Naive thymus-derived CD4-positive, alpha-beta T cell (primary cell): ENCODE measurements at regions of chr1 and their contacts with region 1.

Region 1: DNA sequence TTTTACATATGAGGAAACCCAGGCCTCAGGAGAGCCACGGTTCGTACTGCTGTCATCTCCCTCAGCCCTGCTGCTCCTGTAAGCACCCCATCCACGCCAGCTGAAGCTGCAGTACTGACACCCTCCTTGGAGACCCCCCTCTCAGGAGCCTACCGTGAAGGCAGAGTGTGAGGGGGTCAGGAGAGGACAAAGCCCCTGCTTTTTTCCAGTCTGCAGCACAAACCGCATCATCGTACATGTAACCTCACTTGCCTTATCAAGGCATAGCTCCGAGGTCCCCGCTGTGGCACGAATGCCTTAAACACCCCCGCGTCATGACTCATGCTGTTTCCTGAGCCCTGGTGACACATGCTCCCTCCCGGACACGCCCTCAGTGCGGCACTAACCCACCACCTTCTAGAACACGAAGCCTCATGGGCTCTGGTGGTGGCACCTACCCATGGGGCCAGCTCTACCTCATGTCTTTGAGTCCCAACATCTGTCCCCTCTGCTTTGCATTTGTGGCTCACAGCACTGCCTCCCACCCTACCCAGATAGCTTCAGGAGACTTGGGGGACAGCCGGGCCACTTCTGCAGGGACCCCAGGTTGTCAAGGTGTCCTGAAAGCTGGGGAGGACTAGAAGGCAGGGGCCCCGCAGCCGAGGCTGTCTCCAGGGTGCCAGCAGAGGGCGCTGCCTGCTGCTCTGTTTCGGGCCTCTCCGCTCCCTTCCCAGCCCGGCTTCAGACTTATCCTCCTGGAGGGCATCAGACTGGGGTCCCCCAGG is 4.9 kb downstream of the SH3BGRL3 start:
- DNase-seq: peak; percentile 60 to 97 (median 87)
- ATAC-seq: peak; percentile 81
- H3K4me3 ChIP-seq: peak overlapping the region; percentile 18
- H3K4me3 Mint-ChIP-seq: peak overlapping the region; percentile 44 to 88 (median 76)
- H3K27ac ChIP-seq: peak overlapping the region; percentile 86
- H3K27ac Mint-ChIP-seq: peak overlapping the region; percentile 90 to 99 (median 97)
- H3K4me1 ChIP-seq: peaks cover 89 to 91% of the 10 kb centered on the region in 2 donors
- H3K4me1 Mint-ChIP-seq: peaks cover 62 to 94% (median 86%) of the 10 kb centered on the region in 7 donors
- H3K27me3 ChIP-seq: no peaks in the 10 kb centered on the region
- H3K27me3 Mint-ChIP-seq: no peaks in the 10 kb centered on the region

Region 2: DNA sequence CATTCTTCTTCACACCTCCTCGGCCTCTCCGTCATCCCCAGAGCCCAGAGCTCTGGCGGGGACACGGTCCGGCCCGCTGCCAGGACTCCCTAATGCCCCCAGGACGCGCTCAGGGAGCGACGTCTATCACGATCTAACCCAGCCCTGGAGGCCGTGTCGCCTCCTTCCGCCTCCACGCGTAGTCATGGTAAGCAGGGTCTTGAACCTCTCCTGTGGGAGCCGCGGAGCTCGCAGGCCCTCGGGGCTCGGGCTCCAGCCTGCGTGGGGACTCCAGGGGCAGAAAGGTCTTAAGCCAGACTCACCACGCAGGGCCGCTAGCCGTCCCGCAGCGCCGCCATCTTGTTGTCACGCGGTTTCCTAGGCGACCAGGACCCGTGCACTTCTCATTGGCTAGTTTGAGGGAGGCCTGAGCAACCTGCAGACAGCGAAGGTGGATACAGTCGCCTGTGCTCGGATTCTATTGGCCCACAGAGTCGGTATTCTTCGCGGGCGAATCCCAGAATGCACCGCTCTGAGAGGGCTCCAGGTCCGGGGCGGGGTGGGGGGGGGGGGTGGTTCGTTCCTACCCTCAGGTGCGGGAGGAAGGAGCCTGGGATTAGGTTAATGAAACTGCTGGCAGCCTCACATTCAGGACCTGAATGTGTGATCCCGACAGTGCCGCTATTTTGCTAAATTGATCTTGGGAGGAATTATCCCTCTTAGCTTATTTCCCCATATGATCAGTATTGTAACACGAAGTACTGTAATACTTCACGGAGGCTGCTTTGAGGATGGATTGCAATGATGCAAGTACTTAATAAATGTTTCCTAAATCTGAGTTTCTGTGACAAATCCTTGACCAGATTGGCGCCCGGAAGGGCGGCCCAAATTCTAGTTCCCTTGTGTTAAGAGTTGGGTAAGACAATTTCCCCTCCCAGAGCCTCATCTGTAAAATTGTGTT is 21.8 kb after region 1 on chr1 and contains the start of gene UBXN11:
- CTCF ChIA-PET with region 1: interaction called, 131 read pairs
- POLR2A ChIA-PET with region 1: interaction called, 1,967 read pairs
- intact Hi-C with region 1: loop called (anchors 1 kb)
- DNase-seq: peak; percentile 66 to 95 (median 89)
- ATAC-seq: peak; percentile 99
- H3K4me3 ChIP-seq: peak within 1 kb of the TSS; percentile 87
- H3K4me3 Mint-ChIP-seq: peak within 1 kb of the TSS; percentile 93 to 99 (median 98)
- H3K27ac ChIP-seq: peak within 1 kb of the TSS; percentile 76
- H3K27ac Mint-ChIP-seq: peak within 1 kb of the TSS; percentile 90 to 99 (median 96)
- H3K4me1 ChIP-seq: peaks cover 16 to 31% of the 10 kb centered on the region in 2 donors
- H3K4me1 Mint-ChIP-seq: peaks cover 25 to 58% (median 34%) of the 10 kb centered on the region in 7 donors
- H3K27me3 ChIP-seq: no peaks in the 10 kb centered on the region
- H3K27me3 Mint-ChIP-seq: no peaks in the 10 kb centered on the region
- total RNA-seq, gene UBXN11: 35.7 to 131 (median 124) TPM

Region 3: DNA sequence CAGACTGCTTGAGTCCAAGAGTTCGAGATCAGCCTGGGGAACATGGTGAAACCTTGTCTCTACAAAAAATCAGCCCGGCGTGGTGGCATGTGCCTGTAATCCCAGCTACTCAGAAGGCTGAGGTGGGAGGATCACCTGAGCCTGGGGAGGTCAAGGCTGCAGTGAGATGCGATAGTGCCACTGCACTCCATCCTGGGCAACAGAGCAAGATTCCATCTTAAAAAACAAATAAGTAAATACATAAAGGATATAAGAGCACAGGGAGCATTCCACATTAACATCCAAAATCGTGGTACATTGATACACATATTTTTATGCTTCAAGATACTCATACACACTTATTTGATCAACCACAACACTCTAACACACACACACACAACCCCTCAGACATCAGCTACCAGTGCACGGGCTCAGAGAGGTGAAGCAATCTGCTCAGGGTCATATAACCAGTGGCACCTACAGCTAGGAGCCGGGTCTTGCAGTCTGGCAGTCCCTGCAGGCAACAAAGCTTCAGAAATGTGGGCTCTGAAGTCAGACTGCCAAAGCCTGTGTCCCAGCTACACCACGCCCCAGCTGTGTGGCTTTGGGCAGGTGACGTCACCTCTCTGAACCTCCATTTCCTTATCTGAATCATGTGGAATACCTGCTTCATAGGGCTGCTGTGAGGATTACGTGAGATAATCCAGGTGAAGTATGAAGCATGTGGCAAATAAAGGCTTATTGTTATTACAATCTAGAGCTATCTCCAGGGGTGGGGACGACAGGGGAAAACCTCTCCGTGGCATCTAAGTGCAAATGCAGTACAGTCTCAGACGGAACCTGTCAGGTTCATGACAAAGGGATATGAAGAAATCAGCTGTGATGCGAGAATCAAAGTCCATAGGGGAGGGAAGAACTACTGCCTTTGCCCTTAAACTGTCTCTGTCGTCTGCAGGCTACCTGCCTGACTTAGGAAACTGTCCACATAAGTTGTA is 73.9 kb after region 1 on chr1:
- CTCF ChIA-PET with region 1: interaction called, 22 read pairs
- POLR2A ChIA-PET with region 1: interaction called, 8 read pairs
- intact Hi-C with region 1: loop called (anchors 1 to 2 kb)
- DNase-seq: peak in 8 of 9 donors; percentile 58 to 88 (median 70)
- ATAC-seq: peak; percentile 84
- H3K4me3 ChIP-seq: peak overlapping the region; percentile 10
- H3K4me3 Mint-ChIP-seq: peak overlapping the region; percentile 43 to 83 (median 63)
- H3K27ac ChIP-seq: no peak overlapping the region
- H3K27ac Mint-ChIP-seq: peak overlapping the region in 8 of 9 donors; percentile 28 to 78 (median 46)
- H3K4me1 ChIP-seq: peaks cover 29 to 32% of the 10 kb centered on the region in 2 donors
- H3K4me1 Mint-ChIP-seq: peaks cover 25 to 47% (median 40%) of the 10 kb centered on the region in 7 donors
- H3K27me3 ChIP-seq: no peaks in the 10 kb centered on the region
- H3K27me3 Mint-ChIP-seq: peaks cover 7 to 29% (median 18%) of the 10 kb centered on the region in 5 donors

Region 4: DNA sequence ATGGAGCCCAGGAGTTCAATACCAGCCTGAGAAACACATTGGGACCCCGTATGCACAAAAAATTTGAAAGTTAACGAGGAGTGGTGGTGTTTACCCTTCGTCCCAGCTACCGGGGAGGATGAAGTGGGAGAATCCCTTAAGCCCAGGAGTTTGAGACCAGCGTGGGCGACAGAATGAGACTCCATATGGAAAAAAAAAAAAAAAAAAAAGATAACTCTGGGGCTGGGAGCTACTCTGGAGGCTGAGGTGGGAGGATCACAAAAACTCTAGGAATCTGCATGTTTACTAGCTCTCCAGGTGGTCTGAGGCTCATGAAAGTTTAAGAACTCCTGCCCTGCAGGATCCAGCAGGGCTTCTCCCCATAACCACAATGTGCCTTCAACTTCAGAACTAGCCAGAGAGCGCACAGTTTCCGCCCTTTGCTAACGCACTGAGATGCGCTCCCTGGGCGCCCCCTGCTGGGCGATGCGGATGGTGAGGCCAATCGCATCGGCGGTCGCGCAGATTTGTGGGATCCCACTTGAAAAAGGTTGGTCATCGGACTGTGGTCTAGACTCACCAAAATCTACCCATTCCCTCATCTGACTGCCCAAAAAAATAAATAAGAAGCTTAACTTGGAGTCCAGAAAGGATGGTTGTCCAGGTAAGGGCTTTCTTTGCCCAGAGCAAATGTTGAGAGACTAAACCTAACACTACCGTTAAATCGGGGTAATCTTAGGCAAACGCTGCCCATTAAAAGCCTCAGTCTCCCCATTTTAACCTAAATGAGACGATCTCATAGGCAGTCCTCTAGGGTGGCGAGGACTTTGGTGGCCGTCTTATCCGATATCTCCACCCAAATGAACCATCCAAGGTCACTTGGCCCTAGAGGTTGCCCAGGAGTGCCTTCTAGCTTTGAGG is 79.0 kb after region 1 on chr1:
- CTCF ChIA-PET with region 1: interaction called, 22 read pairs
- POLR2A ChIA-PET with region 1: interaction called, 8 read pairs
- intact Hi-C with region 1: loop called (anchors 1 to 2 kb)
- DNase-seq: peak; percentile 71 to 87 (median 82)
- ATAC-seq: peak; percentile 84
- H3K4me3 ChIP-seq: no peak overlapping the region
- H3K4me3 Mint-ChIP-seq: peak overlapping the region in 6 of 10 donors; percentile 39 to 72 (median 40)
- H3K27ac ChIP-seq: no peak overlapping the region
- H3K27ac Mint-ChIP-seq: peak overlapping the region in 4 of 9 donors; percentile 20 to 52 (median 40)
- H3K4me1 ChIP-seq: peaks cover 30 to 44% of the 10 kb centered on the region in 2 donors
- H3K4me1 Mint-ChIP-seq: peaks cover 28 to 53% (median 47%) of the 10 kb centered on the region in 7 donors
- H3K27me3 ChIP-seq: no peaks in the 10 kb centered on the region
- H3K27me3 Mint-ChIP-seq: peaks cover 7 to 37% (median 16%) of the 10 kb centered on the region in 5 donors

Region 5: GRCh38 chr1:26391450-26391849 is 106.7 kb after region 1 on chr1:
- CTCF ChIA-PET with region 1: interaction called, 11 read pairs
- POLR2A ChIA-PET with region 1: interaction called, 11 read pairs
- intact Hi-C with region 1: loop called (anchors 1 kb)
- DNase-seq: peak in 5 of 9 donors; percentile 17 to 46 (median 43)
- ATAC-seq: peak; percentile 86
- H3K4me3 ChIP-seq: no peak overlapping the region
- H3K4me3 Mint-ChIP-seq: peak overlapping the region in 1 of 10 donors; percentile 55
- H3K27ac ChIP-seq: no peak overlapping the region
- H3K27ac Mint-ChIP-seq: peak overlapping the region in 2 of 9 donors; percentile 1 to 64
- H3K4me1 ChIP-seq: peaks cover 6 to 18% of the 10 kb centered on the region in 2 donors
- H3K4me1 Mint-ChIP-seq: peaks cover 8 to 49% (median 18%) of the 10 kb centered on the region in 7 donors
- H3K27me3 ChIP-seq: no peaks in the 10 kb centered on the region
- H3K27me3 Mint-ChIP-seq: peaks cover 0 to 14% (median 0%) of the 10 kb centered on the region in 5 donors

Region 6: GRCh38 chr1:26431979-26432695 is 147.4 kb after region 1 on chr1 and contains the start of gene DHDDS:
- CTCF ChIA-PET with region 1: no interaction called
- POLR2A ChIA-PET with region 1: interaction called, 4 read pairs
- intact Hi-C with region 1: loop called (anchors 1 to 2 kb)
- DNase-seq: peak; percentile 95 to 98 (median 97)
- ATAC-seq: peak; percentile 99
- H3K4me3 ChIP-seq: peak within 1 kb of the TSS; percentile 88
- H3K4me3 Mint-ChIP-seq: peak within 1 kb of the TSS; percentile 92 to 99 (median 96)
- H3K27ac ChIP-seq: peak within 1 kb of the TSS; percentile 76
- H3K27ac Mint-ChIP-seq: peak within 1 kb of the TSS; percentile 90 to 99 (median 93)
- H3K4me1 ChIP-seq: peaks cover 11 to 15% of the 10 kb centered on the region in 2 donors
- H3K4me1 Mint-ChIP-seq: peaks cover 14 to 26% (median 22%) of the 10 kb centered on the region in 7 donors
- H3K27me3 ChIP-seq: no peaks in the 10 kb centered on the region
- H3K27me3 Mint-ChIP-seq: peaks cover 0 to 15% (median 0%) of the 10 kb centered on the region in 5 donors
- total RNA-seq, gene DHDDS: 28.1 to 58.9 (median 37.7) TPM